HEK293 (cell line): ENCODE measurements at regions of chr14 and their contacts with region 1.

Region 1: GRCh38 chr14:22319526-22320361 is 269.3 kb downstream of the DAD1 start:
- H3K4me3 ChIP-seq: no peak overlapping the region
- H3K27ac ChIP-seq: no peak overlapping the region
- H3K4me1 ChIP-seq: no peaks in the 10 kb centered on the region
- CTCF ChIP-seq: peak; percentile 31; the same call in 1 of the 2 replicates

Region 2: GRCh38 chr14:22303589-22304195 is 16.1 kb before region 1 on chr14:
- CTCF ChIA-PET with region 1: interaction called, 16 read pairs
- POLR2A ChIA-PET with region 1: no interaction called
- H3K4me3 ChIP-seq: no peak overlapping the region
- H3K27ac ChIP-seq: no peak overlapping the region
- H3K4me1 ChIP-seq: no peaks in the 10 kb centered on the region
- CTCF ChIP-seq: no peak

Region 3: GRCh38 chr14:22338917-22339715 is 19.4 kb after region 1 on chr14:
- CTCF ChIA-PET with region 1: interaction called, 10 read pairs
- POLR2A ChIA-PET with region 1: no interaction called
- H3K4me3 ChIP-seq: no peak overlapping the region
- H3K27ac ChIP-seq: no peak overlapping the region
- H3K4me1 ChIP-seq: peaks cover 5% of the 10 kb centered on the region; the same call in 1 of the 2 replicates
- CTCF ChIP-seq: no peak

Region 4: GRCh38 chr14:22370084-22370847 is 50.5 kb after region 1 on chr14:
- CTCF ChIA-PET with region 1: interaction called, 73 read pairs
- POLR2A ChIA-PET with region 1: no interaction called
- H3K4me3 ChIP-seq: no peak overlapping the region
- H3K27ac ChIP-seq: no peak overlapping the region
- H3K4me1 ChIP-seq: no peaks in the 10 kb centered on the region
- CTCF ChIP-seq: no peak

Region 5: DNA sequence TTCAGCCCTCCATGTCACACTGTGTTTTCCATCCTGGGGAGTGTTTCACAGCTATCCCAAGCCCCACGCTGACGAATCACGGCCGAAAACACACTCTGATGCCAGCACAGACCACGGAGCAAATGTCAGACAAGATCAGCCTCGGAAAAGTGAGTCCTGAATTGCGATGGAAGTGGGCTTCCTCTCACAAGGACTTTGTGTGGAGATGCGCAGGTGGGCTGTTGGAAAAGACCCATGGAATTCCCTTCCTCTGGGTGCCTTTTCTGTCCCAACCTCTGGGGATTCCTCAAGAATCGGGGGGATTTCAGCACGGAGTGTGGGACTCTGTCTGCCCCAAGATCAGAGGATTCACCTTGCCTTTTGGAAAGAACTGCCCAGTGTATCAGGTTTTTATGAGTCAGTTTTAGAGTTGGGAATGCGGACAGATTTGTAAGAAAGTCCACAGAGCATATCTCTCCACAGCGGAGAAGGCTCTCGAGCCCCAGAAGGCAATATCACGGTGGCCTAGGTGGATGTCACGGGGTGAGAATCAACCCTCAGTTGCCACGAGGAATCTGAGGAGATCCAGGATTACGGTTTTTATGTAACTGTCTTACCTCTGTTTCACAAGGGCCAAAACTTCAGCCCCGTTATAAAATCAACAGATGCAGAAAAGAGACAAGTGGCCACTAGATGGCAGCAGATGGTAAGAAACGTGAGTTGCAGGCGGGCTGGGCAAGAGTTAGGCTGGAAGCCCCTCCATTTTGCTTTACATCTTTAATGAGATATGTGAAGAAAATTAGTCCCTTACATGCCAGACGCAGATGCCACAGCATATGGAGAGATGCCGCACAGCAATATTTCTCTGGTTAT is 67.4 kb after region 1 on chr14:
- CTCF ChIA-PET with region 1: interaction called, 18 read pairs
- POLR2A ChIA-PET with region 1: no interaction called
- H3K4me3 ChIP-seq: no peak overlapping the region
- H3K27ac ChIP-seq: no peak overlapping the region
- H3K4me1 ChIP-seq: no peaks in the 10 kb centered on the region
- CTCF ChIP-seq: peak; percentile 69